ENCODE measurements at regions of chr7 and their contacts with region 1.

Region 1: DNA sequence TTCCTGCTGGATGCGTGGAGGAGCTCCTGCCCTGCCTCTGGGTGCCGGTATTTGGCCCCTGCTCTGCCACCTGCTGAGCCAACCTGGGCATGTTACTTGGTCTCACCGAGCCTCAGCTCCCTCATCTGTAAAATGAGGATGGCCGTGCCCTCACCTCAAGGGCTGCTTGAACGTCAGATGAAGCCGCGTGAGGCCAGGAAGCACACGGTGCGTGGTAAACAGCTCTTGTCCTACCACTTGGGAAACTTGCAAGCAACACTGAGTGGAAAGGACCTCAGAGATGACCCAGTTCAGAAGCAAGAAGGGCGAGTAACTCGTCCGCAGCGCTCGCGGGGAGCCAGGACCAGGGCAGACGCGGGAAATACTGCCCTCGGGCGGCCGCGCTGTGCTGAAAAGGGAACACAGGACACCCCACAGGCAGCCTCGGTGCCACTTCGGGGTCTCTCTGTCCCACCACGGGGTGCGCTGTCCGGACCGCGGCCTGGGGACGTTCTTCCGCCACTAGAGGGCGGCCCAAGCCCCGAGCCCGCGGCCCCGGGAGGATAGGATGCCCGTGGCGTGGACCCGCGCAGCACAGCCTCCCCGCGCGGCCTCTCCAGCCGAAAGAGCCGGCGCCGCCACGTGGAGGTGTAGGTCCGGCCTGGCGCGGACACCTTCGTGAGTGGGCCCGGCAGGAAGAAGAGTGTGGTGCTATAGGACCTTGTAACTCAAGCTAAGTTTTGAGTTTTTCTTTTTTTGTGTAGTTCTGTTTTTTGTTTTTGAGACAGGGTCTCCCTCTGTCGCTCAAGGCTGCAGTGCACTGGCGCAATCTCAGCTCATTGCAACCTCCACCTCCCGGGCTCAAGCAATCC is 94.1 kb downstream of the PRKAG2 start:
- DNase-seq: peak; percentile 82 to 91 (median 90)
- ATAC-seq: peak; percentile 86 to 93
- H3K4me3 ChIP-seq: no peak overlapping the region
- H3K27ac ChIP-seq: no peak overlapping the region
- H3K4me1 ChIP-seq: no peaks in the 10 kb centered on the region
- H3K27me3 ChIP-seq: no peaks in the 10 kb centered on the region

Region 2: DNA sequence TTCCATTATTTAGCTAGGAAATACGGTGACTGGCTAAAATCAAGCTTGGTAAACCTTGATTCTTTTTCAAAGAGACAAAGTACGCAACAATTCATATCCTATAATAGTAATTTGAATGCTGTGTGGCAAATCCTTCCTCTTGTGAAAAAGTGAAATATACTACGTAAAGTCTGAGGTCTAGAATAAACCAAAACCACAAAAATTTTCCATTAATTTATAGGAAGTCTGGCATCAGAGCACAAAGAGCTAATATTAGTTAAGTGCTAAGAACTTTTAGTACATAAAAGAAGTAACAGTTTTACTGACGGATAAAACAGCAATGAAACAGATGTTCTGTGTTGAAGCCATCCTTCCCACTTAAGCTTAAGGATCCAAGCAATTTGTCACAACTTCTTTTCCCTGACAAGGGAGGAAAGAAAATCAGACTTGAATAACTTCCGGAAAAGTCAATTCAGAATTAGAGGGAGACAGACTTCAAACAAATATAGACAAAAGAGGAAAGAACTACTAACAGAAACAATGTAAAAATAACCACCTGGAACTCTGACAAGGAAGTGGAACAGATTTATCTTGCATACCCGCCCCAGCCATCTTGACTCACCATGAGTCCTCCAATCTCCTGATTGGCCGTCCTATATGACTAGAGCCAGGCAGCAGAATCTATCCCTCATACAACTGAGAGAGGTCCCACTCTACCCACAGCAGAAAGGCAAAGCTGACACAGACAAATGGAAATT is 297.7 kb before region 1 on chr7:
- intact Hi-C with region 1: no loop called
- DNase-seq: no peak
- ATAC-seq: peak; percentile 55 to 78
- H3K4me3 ChIP-seq: no peak overlapping the region
- H3K27ac ChIP-seq: no peak overlapping the region
- H3K4me1 ChIP-seq: peaks cover 6% of the 10 kb centered on the region
- H3K27me3 ChIP-seq: no peaks in the 10 kb centered on the region

Region 3: GRCh38 chr7:151759591-151760042 is 23.2 kb before region 1 on chr7:
- intact Hi-C with region 1: no loop called
- DNase-seq: peak in 1 of 3 donors; percentile 60
- ATAC-seq: peak; percentile 50 to 59
- H3K4me3 ChIP-seq: no peak overlapping the region
- H3K27ac ChIP-seq: no peak overlapping the region
- H3K4me1 ChIP-seq: peaks cover 2% of the 10 kb centered on the region
- H3K27me3 ChIP-seq: no peaks in the 10 kb centered on the region

Region 4: DNA sequence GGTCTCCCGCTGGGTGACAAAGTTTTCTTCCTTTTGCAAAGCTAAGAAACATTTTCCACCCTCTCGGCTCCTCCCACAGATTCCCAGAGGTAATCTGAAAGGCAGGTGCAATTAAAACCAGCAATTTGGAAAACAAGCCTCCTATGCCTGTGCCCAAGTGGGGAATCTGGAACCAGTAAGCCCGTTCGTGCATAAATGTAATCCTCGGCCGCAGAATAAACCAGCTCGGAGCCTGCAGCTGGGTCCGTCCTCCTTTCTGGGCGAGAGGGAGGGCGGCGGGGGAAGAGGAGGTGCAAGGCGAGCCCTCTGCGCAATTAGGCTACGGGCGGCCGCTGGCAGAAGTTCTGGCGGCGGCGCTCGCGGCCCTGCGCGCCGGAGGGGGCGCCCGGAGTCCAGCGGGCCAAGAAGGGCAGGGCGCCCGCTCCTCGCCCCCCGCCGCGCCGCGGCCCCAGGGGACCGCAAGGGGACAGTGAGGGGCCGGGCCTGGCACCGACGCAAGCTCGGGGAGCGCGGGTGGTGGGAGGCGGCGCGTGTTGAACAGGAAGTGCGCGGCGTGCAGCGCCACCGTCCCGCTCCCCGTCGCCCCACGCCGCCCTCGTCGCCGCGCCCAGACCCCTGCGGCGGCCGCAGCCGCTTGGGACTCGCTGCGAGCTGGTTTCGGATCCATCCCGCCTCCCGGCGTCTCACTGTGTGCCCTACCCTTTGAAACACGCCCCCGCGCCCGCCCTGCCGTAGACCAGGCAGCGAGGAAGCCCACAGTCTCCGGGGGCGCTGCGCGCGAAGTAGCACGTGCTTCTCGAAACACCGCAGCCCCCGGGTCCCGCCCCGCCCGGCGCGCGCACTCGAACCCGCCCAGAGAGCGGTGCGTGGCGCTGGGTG is 94.3 kb after region 1 on chr7 and contains the start of gene PRKAG2:
- intact Hi-C with region 1: loop called in 1 of 4 experiments (anchors 10 kb)
- DNase-seq: peak; percentile 72 to 90 (median 90)
- ATAC-seq: peak; percentile 46 to 65
- H3K4me3 ChIP-seq: peak within 1 kb of the TSS; percentile 84
- H3K27ac ChIP-seq: peak within 1 kb of the TSS; percentile 78
- H3K4me1 ChIP-seq: peaks cover 2% of the 10 kb centered on the region
- H3K27me3 ChIP-seq: no peaks in the 10 kb centered on the region
- total RNA-seq, gene PRKAG2: 167 to 298 (median 211) TPM

Region 5: GRCh38 chr7:151923097-151923876 is 140.5 kb after region 1 on chr7:
- intact Hi-C with region 1: loop called in 1 of 4 experiments (anchors 5 kb)
- DNase-seq: peak in 1 of 3 donors; percentile 61
- ATAC-seq: peak; percentile 69 to 74
- H3K4me3 ChIP-seq: no peak overlapping the region
- H3K27ac ChIP-seq: peak overlapping the region; percentile 9
- H3K4me1 ChIP-seq: no peaks in the 10 kb centered on the region
- H3K27me3 ChIP-seq: no peaks in the 10 kb centered on the region

Region 6: DNA sequence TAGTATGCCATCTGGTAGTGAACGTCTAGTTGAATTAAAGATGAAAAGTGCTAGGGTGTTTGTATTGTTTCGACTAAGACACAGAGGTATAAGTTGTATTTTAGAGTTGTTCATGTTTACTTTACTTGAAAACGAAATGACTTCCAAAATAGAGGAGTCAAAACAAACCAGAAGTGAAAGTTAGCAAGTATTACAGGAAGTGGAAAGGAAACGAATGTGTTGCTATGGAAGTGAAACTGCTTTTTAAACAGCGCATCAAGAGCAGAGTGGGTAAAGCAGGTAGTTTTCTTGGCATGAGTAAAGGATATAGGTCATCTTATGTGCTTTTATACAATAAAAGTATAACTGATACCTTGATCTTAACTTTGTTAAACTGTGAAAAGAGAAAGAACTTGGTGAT is 153.4 kb after region 1 on chr7:
- intact Hi-C with region 1: loop called in 2 of 4 experiments (anchors 2 to 10 kb)
- DNase-seq: no peak
- ATAC-seq: no peak
- H3K4me3 ChIP-seq: no peak overlapping the region
- H3K27ac ChIP-seq: no peak overlapping the region
- H3K4me1 ChIP-seq: no peaks in the 10 kb centered on the region
- H3K27me3 ChIP-seq: no peaks in the 10 kb centered on the region

Region 7: DNA sequence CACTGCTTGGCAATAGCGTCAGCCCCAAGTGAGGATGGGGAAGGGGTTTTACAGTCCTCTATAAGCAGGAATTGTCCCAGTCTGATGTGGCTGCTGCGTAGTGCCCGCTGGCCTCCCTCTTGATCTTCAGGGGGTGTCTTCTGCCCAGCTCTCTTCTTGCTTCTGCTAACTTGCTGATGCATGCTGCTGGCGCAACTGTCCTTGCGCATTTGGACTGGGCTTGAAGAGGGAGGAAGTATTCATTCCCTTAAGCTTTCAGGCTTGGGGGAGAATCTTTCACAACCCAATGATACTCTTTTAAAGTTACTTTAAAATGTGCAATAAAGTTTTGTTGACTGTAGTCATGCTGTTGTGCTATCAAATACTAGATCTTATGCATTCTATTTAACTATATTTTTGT is 253.0 kb after region 1 on chr7:
- intact Hi-C with region 1: no loop called
- DNase-seq: no peak
- ATAC-seq: no peak
- H3K4me3 ChIP-seq: no peak overlapping the region
- H3K27ac ChIP-seq: no peak overlapping the region
- H3K4me1 ChIP-seq: no peaks in the 10 kb centered on the region
- H3K27me3 ChIP-seq: no peaks in the 10 kb centered on the region

Region 8: DNA sequence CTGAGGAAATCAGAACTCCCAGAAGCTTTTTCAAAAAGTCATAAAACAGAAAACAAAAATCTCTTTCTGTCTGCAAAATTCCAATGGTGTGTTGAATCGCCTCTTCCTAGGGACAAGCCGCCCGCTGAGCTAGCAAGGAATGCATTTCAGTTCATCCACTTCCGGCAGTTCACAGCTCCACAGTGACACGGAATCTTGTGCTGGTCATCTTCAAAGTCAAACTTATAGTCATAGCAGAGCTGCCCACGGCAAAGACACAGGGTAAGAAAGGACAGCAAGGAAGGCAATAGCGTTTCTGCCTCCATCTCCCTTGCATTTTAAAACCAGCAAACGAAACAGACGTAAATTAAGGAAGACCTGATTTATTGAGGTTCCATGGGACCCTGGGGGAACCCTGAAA is 353.9 kb after region 1 on chr7:
- intact Hi-C with region 1: no loop called
- DNase-seq: peak in 1 of 3 donors; percentile 57
- ATAC-seq: peak; percentile 59 to 74
- H3K4me3 ChIP-seq: no peak overlapping the region
- H3K27ac ChIP-seq: peak overlapping the region; percentile 75
- H3K4me1 ChIP-seq: peaks cover 5% of the 10 kb centered on the region
- H3K27me3 ChIP-seq: no peaks in the 10 kb centered on the region